B cell (primary cell): ENCODE measurements at regions of chr7 and their contacts with region 1.

Region 1: DNA sequence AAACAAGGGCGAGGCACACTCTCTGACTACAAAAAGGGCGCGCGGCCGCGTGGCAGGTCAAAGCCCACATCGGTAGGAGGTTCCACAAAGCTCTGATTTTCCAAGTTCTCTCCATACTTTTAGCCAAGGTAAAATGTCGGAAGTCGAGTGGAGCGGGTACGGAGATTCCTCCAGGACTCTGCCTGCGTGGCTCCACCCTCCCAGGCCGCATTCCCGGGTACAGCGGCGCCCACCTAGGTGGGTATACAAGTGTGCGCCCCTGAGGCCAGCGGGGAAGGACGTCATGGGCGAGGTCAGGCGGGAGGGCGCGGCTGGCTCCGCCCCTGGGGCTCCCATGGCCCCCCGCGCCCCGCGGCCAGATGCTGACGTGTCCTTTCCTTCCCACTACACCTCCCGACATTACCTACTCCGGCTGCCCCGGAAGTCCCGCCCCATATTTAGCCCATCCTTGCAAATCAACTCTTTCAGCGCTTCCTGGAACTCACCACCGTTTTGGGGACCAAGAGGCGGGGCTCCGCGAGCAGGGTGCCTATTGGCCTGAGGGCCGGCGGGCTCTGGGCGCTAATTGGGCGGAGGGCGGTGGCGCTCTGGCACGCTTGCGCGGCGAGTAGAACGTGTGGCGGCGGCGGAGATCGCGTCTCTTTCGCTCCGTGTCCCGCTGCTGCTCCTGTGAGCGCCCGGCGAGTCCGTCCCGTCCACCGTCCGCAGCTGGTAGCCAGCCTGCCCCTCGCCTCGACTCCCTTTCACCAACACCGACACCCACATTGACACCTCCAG is at the start of gene SND1:
- DNase-seq: peak; percentile 99
- ATAC-seq: peak; percentile 90
- H3K4me3 ChIP-seq: peak within 1 kb of the TSS; percentile 73 to 90 (median 86)
- H3K4me3 Mint-ChIP-seq: no peak within 1 kb of the TSS
- H3K27ac ChIP-seq: peak within 1 kb of the TSS; percentile 93 to 96
- H3K27ac Mint-ChIP-seq: peak within 1 kb of the TSS; percentile 97
- H3K4me1 ChIP-seq: peaks cover 38 to 41% of the 10 kb centered on the region in 2 donors
- H3K4me1 Mint-ChIP-seq: peaks cover 47% of the 10 kb centered on the region
- H3K27me3 ChIP-seq: no peaks in the 10 kb centered on the region
- H3K27me3 Mint-ChIP-seq: no peaks in the 10 kb centered on the region
- CTCF ChIP-seq: no peak
- total RNA-seq, gene SND1: 161 and 165 TPM in 2 replicates

Region 2: DNA sequence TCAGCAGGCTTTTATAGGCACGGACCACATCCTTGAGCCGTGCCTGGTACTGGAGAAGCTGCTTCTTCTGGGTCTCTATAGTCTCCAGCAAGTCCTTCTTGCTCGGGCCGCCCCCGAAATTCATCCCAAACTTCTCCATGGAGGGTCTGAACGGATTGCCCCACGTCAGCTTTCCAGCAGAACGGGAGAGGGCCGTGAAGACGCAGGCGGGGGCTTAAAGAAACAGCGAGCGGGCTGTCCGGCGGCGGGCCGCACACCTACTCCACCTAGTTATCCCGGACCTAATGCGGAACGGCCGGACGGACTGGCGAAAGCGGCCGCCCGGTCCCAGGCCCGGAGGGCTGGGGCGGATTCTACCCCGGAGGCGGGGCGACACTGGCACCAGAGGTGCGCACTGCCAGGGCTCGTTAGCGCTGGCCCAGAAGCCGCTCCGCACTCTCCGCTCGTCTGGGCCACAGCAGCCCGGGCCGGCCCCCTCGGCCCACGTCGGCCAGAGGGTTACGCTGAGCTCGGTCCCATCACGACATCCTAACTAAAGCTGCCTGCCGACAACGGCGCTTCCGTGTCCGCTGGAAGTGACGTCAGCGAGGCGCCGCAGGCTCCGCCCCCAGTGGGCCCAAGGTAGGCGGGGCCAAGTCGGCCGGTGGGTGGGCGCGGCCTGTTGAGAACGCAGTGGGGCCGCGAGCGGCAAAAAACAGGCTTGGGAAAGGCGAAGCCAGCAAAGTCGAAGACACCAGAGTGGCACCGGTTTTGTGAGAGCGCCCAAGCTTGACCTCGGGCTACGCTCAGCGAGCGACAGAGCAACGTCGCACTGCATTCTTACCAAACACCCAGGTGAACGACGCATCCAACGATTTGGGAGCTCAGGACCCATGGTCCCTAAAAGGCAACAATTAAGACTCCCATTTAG is 66.4 kb before region 1 on chr7 and contains the start of gene GCC1:
- CTCF ChIA-PET with region 1: no interaction called
- POLR2A ChIA-PET with region 1: interaction called, 10 read pairs
- intact Hi-C with region 1: loop called (anchors 1 kb)
- DNase-seq: peak; percentile 95
- ATAC-seq: peak; percentile 80
- H3K4me3 ChIP-seq: peak within 1 kb of the TSS; percentile 84 to 97 (median 95)
- H3K4me3 Mint-ChIP-seq: peak within 1 kb of the TSS; percentile 89
- H3K27ac ChIP-seq: peak within 1 kb of the TSS; percentile 55 to 89
- H3K27ac Mint-ChIP-seq: peak within 1 kb of the TSS; percentile 89
- H3K4me1 ChIP-seq: peaks cover 45 to 54% of the 10 kb centered on the region in 2 donors
- H3K4me1 Mint-ChIP-seq: peaks cover 73% of the 10 kb centered on the region
- H3K27me3 ChIP-seq: no peaks in the 10 kb centered on the region
- H3K27me3 Mint-ChIP-seq: no peaks in the 10 kb centered on the region
- CTCF ChIP-seq: no peak
- total RNA-seq, gene GCC1: 25.5 and 26.4 TPM in 2 replicates

Region 3: DNA sequence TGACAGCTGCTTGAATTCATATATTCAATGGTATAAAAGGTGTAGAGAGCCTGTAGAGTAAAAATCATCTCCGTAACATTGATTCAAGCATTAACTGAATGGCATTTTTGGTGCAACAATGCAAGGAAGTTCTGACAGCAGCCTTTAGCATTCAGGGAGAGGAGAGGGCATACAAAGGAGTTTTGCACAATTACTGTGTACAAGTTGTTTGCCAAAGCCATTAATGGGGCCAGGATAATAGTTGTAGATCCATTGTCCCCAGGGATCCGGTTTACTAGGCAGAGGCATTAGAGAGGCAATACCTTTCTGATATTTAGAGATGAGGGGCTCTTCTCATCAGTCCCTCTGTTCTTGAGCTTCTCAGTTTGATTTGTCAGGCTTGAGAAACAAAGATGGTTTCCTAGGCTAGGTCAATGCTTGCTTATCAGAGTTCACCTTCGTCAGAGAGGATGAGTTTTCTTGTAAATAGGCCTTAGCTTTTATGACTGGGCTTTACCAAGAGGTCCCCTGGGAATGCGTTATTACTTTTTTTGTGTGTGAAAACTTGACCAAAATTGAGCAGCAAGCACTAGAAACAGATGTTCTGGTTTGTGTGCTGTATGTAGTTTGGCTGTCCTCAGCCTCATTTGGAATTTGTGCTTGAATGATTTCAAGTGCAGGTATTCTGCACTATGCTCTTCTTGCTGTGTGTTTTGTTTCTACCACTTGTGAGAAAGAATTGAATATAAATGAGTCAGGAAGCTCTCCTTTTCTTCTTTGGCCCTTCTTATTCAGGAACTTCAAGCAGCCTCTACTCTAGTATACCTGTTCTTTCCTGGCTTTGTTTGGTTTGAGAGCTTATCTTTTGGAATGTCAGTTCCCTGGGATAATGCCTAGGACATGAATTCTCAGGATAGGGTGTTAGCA is 32.3 kb after region 1 on chr7:
- CTCF ChIA-PET with region 1: interaction called, 4 read pairs
- POLR2A ChIA-PET with region 1: interaction called, 3 read pairs
- intact Hi-C with region 1: loop called (anchors 1 kb)
- DNase-seq: no peak
- ATAC-seq: peak; percentile 18
- H3K4me3 ChIP-seq: no peak overlapping the region
- H3K4me3 Mint-ChIP-seq: peak overlapping the region; percentile 4
- H3K27ac ChIP-seq: peak overlapping the region in 1 of 2 donors; percentile 44
- H3K27ac Mint-ChIP-seq: no peak overlapping the region
- H3K4me1 ChIP-seq: peaks cover 26 to 28% of the 10 kb centered on the region in 2 donors
- H3K4me1 Mint-ChIP-seq: peaks cover 41% of the 10 kb centered on the region
- H3K27me3 ChIP-seq: no peaks in the 10 kb centered on the region
- H3K27me3 Mint-ChIP-seq: no peaks in the 10 kb centered on the region
- CTCF ChIP-seq: no peak

Region 4: DNA sequence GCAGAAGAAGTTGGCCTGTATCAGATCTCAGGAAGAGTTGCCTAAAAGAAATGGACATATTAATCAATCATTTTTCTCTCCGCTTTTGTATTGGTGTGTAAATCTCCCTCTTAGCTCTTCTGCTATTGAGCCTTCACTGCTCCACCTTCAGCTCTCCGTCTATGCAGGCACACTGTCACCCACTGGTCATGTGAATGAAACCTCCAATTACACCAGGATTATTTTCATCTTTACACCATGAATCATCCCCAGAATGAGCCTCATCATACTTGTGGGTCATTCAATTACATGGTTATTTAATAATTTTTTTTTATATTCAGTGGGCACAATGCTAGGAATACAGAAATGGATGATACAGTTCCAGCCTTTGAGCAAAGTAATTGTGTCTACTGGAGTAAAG is 286.8 kb after region 1 on chr7:
- CTCF ChIA-PET with region 1: no interaction called
- POLR2A ChIA-PET with region 1: no interaction called
- intact Hi-C with region 1: no loop called
- DNase-seq: no peak
- ATAC-seq: no peak
- H3K4me3 ChIP-seq: no peak overlapping the region
- H3K4me3 Mint-ChIP-seq: no peak overlapping the region
- H3K27ac ChIP-seq: no peak overlapping the region
- H3K27ac Mint-ChIP-seq: no peak overlapping the region
- H3K4me1 ChIP-seq: peaks cover 0 to 21% of the 10 kb centered on the region in 2 donors
- H3K4me1 Mint-ChIP-seq: peaks cover 46% of the 10 kb centered on the region
- H3K27me3 ChIP-seq: no peaks in the 10 kb centered on the region
- H3K27me3 Mint-ChIP-seq: no peaks in the 10 kb centered on the region
- CTCF ChIP-seq: no peak

Region 5: DNA sequence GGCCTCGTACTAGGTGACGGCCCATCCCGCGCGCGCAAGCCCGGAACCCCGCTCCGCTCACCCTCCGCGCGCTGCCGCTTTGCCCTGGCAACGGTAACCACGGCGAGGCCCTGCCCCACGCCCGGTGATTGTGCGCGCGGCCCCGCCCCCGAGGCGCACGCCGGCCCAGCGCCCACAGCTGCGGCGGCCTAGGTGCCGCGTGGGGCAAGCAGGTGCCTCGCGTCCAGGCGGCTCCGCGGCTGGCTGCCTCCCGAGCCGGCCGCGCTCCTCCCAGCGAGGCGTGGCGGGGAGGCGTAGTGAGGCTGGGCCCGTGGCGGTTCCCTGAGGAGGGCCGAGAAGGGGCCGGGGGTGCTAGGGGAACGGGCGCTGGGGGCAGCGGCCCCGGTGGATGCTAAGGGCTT is 1850.6 kb after region 1 on chr7 and contains the start of gene SMKR1:
- CTCF ChIA-PET with region 1: no interaction called
- POLR2A ChIA-PET with region 1: no interaction called
- intact Hi-C with region 1: loop called (anchors 5 kb)
- DNase-seq: peak; percentile 98
- ATAC-seq: peak; percentile 89
- H3K4me3 ChIP-seq: peak within 1 kb of the TSS; percentile 54 to 77 (median 66)
- H3K4me3 Mint-ChIP-seq: peak within 1 kb of the TSS; percentile 90
- H3K27ac ChIP-seq: peak within 1 kb of the TSS; percentile 72
- H3K27ac Mint-ChIP-seq: peak within 1 kb of the TSS; percentile 89
- H3K4me1 ChIP-seq: peaks cover 14 to 32% of the 10 kb centered on the region in 2 donors
- H3K4me1 Mint-ChIP-seq: peaks cover 22% of the 10 kb centered on the region
- H3K27me3 ChIP-seq: no peaks in the 10 kb centered on the region
- H3K27me3 Mint-ChIP-seq: no peaks in the 10 kb centered on the region
- CTCF ChIP-seq: no peak
- total RNA-seq, gene SMKR1: 2.9 and 3.8 TPM in 2 replicates